IMR-90 (cell line): ENCODE measurements at regions of chr14 and their contacts with region 1.

Region 1: GRCh38 chr14:68795597-68796417 is 2.9 kb upstream of the ZFP36L1 start:
- DNase-seq: peak; percentile 79
- ATAC-seq: peak; percentile 31
- H3K4me3 ChIP-seq: peak overlapping the region; percentile 72
- H3K27ac ChIP-seq: peak overlapping the region; percentile 98
- H3K4me1 ChIP-seq: peaks cover 16% of the 10 kb centered on the region
- H3K27me3 ChIP-seq: no peaks in the 10 kb centered on the region
- CTCF ChIP-seq: peak; percentile 58
- POLR2A ChIP-seq: peak; percentile 87
- RAD21 ChIP-seq: peak; percentile 39

Region 2: DNA sequence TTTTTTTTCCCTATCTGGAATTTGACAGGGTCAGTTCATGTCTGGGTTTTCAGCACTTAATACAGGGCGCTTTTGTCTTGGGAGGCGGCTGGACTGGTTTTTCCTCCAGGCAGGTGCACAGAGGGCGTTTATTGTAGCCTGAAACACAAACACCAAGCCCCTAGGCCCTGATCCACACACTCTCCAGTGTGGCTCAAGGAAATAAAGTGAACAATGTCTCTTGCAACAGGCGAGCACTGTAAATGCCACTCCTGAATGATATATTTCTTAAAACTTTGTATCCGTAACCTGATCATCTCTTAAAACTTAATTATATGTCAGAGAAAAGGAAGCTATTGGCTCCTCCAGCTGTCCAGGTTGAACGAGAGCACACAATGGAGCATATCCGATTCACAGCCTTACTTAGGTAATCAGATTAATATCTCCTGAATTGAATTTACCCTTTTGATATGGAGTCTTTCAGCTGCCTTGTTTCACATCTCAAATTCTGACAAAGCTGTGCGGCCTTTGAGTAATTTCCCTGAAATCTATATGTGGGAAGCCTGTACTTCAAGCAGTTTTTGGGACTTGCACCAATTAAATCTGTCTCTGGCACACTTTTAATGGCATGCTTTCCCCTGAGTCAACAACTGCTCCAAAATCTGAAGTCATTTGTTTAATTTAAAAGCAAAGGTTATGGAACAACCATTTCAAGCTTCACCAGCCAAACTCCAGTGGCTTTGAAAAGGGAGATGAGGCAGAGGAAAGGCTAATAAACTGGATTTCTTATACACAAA is 488.6 kb before region 1 on chr14:
- CTCF ChIA-PET with region 1: interaction called, 4 read pairs
- POLR2A ChIA-PET with region 1: no interaction called
- dilution Hi-C with region 1: no loop called
- in situ Hi-C with region 1: no loop called
- intact Hi-C with region 1: loop called (anchors 5 kb)
- DNase-seq: peak; percentile 51
- ATAC-seq: peak; percentile 60
- H3K4me3 ChIP-seq: no peak overlapping the region
- H3K27ac ChIP-seq: peak overlapping the region; percentile 67; the same call in 1 of the 2 replicates
- H3K4me1 ChIP-seq: peaks cover 4% of the 10 kb centered on the region
- H3K27me3 ChIP-seq: no peaks in the 10 kb centered on the region
- CTCF ChIP-seq: no peak
- POLR2A ChIP-seq: no peak
- RAD21 ChIP-seq: no peak

Region 3: DNA sequence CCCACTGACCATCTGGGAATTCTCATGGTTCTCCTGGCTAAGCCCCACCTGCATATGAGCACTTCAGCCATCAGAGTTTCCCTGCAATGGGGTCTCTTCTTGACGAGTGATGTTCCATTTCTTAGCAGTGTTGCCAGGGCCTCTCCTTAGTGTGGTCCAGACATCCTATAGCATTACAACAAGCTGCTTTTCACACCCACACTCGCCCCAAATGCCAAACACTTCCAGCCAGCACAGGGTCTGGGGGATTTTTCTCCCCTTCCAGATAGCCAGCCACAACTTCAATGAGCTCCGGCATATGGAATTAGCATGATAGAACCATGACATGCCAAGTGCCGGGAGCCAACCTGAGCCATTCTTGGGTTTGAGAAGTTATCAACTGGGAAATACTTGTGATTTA is 270.3 kb before region 1 on chr14:
- CTCF ChIA-PET with region 1: no interaction called
- POLR2A ChIA-PET with region 1: interaction called, 24 read pairs
- dilution Hi-C with region 1: no loop called
- in situ Hi-C with region 1: no loop called
- intact Hi-C with region 1: no loop called
- DNase-seq: no peak
- ATAC-seq: no peak
- H3K4me3 ChIP-seq: no peak overlapping the region
- H3K27ac ChIP-seq: no peak overlapping the region
- H3K4me1 ChIP-seq: peaks cover 5% of the 10 kb centered on the region
- H3K27me3 ChIP-seq: no peaks in the 10 kb centered on the region
- CTCF ChIP-seq: no peak
- POLR2A ChIP-seq: no peak
- RAD21 ChIP-seq: no peak

Region 4: DNA sequence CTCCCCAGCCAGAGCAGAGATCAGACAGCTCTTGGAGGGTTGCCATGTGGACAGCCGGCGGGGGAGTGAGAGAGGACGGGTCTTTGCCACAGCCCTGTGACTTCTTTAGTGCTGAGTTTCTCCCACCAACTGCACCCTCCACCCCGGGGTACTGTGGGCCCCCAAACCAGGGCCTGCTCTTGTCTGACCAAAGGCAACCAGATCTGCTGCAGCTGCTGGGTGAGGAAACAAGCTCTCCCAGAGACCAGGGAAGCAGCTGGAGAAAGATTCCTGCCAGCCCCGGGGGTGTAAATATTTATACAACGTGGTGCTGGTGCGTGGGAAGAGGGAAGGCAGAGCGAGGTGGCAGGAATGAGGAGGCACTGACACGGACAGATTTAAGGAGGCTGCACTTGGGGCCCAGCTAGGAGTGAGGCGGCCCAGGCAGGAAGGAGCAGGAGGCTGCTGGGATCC is 11.4 kb after region 1 on chr14:
- CTCF ChIA-PET with region 1: interaction called, 3 read pairs
- POLR2A ChIA-PET with region 1: interaction called, 21 read pairs
- dilution Hi-C with region 1: no loop called
- in situ Hi-C with region 1: no loop called
- intact Hi-C with region 1: loop called (anchors 1 kb)
- DNase-seq: peak; percentile 94
- ATAC-seq: peak; percentile 88
- H3K4me3 ChIP-seq: no peak overlapping the region
- H3K27ac ChIP-seq: peak overlapping the region; percentile 94
- H3K4me1 ChIP-seq: peaks cover 23% of the 10 kb centered on the region
- H3K27me3 ChIP-seq: no peaks in the 10 kb centered on the region
- CTCF ChIP-seq: no peak
- POLR2A ChIP-seq: 0 out of 2 replicates have a peak, but pooled peaks have one; percentile 20
- RAD21 ChIP-seq: no peak